Activated T-helper 1 cell treated with anti-CD3 and anti-CD28 coated beads, Interleukin-12 subunit alpha, Interleukin-12 subunit beta, Interleukin-2, Interleukin-4 antibody, amounts not matched to agents 30 ng/mL and 10 ng/mL and 1 ng/mL, durations not matched to agents 14 hours and 24 hours and 36 hours (primary cell): ENCODE measurements at regions of chr1 and their contacts with region 1.

Region 1: GRCh38 chr1:28144203-28145135 is 32.0 kb downstream of the PTAFR start:
- DNase-seq: peak; percentile 30
- H3K4me3 Mint-ChIP-seq: no peak overlapping the region
- H3K27ac Mint-ChIP-seq: no peak overlapping the region
- H3K4me1 Mint-ChIP-seq: peaks cover 26% of the 10 kb centered on the region
- H3K27me3 Mint-ChIP-seq: peaks cover 36% of the 10 kb centered on the region

Region 2: GRCh38 chr1:27958513-27959399 is 185.7 kb before region 1 on chr1:
- intact Hi-C with region 1: no loop called
- DNase-seq: no peak
- H3K4me3 Mint-ChIP-seq: peak overlapping the region; percentile 87
- H3K27ac Mint-ChIP-seq: peak overlapping the region; percentile 74
- H3K4me1 Mint-ChIP-seq: peaks cover 15% of the 10 kb centered on the region
- H3K27me3 Mint-ChIP-seq: no peaks in the 10 kb centered on the region

Region 3: DNA sequence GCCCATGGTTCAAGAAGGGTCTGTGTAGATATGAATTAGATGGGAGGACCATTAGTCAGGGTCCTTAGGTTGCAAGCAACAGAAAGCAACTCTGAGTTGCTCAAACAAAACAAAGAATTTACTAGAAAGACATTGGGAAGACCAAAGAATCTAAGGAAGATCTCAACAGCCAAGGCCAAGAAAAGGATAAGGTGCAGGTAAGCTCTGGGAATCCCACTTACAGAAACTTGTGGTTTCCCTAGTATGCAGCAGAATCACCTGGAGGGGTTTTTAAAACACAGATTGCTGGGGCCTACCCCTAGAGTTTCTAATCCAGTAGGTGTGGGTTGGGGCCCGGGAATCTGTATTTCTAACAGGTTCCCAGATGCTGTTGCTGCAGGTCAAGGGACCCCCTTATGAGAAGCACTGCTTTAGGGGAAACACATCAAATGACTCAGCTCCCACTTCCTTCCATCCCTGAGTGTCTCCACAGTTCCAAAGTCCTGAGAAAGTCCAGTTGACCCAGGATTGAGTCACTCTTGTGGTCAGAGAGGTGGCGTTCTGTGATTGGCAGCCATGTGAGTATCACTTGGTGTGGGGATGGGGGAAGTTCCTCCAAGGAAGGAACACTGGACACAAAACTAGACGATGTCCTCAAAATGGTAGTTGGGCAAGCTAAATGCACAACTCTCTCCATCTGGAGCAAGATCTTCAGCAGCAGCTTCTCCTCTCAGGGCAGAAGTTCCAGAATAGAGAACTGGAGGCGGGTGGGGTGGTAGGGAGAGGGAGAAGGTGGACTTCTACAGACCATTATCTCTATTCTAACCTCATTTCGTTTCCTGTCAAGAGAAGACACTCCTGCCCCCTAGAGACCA is 31.9 kb before region 1 on chr1:
- intact Hi-C with region 1: loop called (anchors 1 kb)
- DNase-seq: no peak
- H3K4me3 Mint-ChIP-seq: no peak overlapping the region
- H3K27ac Mint-ChIP-seq: no peak overlapping the region
- H3K4me1 Mint-ChIP-seq: peaks cover 37% of the 10 kb centered on the region
- H3K27me3 Mint-ChIP-seq: peaks cover 11% of the 10 kb centered on the region

Region 4: GRCh38 chr1:28172713-28173150 is 28.3 kb after region 1 on chr1:
- intact Hi-C with region 1: loop called (anchors 1 kb)
- DNase-seq: peak; percentile 51
- H3K4me3 Mint-ChIP-seq: peak overlapping the region; percentile 40
- H3K27ac Mint-ChIP-seq: peak overlapping the region; percentile 37
- H3K4me1 Mint-ChIP-seq: peaks cover 59% of the 10 kb centered on the region
- H3K27me3 Mint-ChIP-seq: peaks cover 45% of the 10 kb centered on the region

Region 5: GRCh38 chr1:28180306-28181305 is 36.1 kb after region 1 on chr1:
- intact Hi-C with region 1: loop called (anchors 5 kb)
- DNase-seq: no peak
- H3K4me3 Mint-ChIP-seq: peak overlapping the region; percentile 60
- H3K27ac Mint-ChIP-seq: peak overlapping the region; percentile 45
- H3K4me1 Mint-ChIP-seq: peaks cover 19% of the 10 kb centered on the region
- H3K27me3 Mint-ChIP-seq: peaks cover 54% of the 10 kb centered on the region